ENCODE measurements at regions of chr18 and their contacts with region 1.

Region 1: DNA sequence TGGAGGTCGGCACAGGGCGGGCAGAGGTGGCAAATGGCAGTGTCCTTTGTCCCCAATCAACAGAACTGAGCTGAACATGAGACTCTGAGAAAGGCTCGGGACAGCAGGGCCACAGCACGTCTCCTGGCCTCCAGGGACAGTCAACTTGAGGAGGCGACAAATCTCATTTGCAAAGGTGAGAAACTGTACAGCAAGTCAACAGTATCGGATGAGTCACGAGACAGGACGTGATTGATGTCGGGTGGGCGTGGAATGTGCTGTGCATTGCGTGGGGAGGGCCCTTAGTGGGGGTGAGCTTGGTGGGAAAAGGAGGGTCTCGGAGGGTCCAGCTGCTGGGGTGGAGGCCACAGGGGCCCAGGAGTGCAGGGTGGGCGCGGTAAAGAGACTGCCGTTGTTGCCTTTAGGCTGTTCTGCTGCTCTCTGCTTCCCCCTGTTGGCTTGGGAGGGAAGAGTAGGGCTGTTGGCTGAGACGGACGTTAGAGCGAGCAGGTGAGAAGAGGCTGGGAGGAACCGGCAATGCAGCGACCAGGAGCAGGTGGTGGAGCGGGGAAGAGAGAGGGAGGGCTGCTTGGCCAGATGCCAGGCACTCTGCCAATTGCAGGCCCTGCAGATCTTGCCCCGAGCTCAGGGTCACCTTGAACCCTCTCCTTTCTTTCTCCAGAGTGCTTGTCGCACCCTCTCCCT is 164.3 kb downstream of the BCL2 start:
- DNase-seq: peak; percentile 71 to 81 (median 79)
- H3K4me3 ChIP-seq: peak overlapping the region in 4 of 7 experiments; percentile 30 to 71 (median 58)
- H3K27ac ChIP-seq: no peak overlapping the region
- H3K4me1 ChIP-seq: peaks cover 0 to 13% (median 5%) of the 10 kb centered on the region in 4 experiments
- H3K27me3 ChIP-seq: no peaks in the 10 kb centered on the region

Region 2: DNA sequence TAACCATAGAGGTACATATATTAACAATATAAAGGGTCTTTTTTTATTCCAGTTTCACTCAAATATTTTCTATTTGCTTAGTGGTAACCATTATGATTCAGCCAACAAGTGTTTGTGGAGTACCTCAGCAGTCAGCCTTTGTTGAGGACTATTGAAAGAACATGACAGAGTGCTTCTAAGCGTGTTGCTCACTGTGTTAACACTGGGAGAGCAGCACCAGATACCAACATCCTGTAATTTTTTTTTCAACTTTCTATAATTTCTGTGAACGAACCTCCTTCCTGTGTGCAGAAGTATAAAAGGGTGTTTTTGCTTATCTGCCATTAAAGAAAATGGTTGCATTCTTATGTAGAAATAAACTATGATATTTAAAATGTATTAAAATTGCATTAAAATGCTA is 200.9 kb before region 1 on chr18:
- CTCF ChIA-PET with region 1: no interaction called
- POLR2A ChIA-PET with region 1: no interaction called
- DNase-seq: peak in 2 of 3 donors; percentile 29 to 41
- H3K4me3 ChIP-seq: no peak overlapping the region
- H3K27ac ChIP-seq: no peak overlapping the region
- H3K4me1 ChIP-seq: peaks cover 21 to 42% (median 30%) of the 10 kb centered on the region in 4 experiments
- H3K27me3 ChIP-seq: no peaks in the 10 kb centered on the region

Region 3: DNA sequence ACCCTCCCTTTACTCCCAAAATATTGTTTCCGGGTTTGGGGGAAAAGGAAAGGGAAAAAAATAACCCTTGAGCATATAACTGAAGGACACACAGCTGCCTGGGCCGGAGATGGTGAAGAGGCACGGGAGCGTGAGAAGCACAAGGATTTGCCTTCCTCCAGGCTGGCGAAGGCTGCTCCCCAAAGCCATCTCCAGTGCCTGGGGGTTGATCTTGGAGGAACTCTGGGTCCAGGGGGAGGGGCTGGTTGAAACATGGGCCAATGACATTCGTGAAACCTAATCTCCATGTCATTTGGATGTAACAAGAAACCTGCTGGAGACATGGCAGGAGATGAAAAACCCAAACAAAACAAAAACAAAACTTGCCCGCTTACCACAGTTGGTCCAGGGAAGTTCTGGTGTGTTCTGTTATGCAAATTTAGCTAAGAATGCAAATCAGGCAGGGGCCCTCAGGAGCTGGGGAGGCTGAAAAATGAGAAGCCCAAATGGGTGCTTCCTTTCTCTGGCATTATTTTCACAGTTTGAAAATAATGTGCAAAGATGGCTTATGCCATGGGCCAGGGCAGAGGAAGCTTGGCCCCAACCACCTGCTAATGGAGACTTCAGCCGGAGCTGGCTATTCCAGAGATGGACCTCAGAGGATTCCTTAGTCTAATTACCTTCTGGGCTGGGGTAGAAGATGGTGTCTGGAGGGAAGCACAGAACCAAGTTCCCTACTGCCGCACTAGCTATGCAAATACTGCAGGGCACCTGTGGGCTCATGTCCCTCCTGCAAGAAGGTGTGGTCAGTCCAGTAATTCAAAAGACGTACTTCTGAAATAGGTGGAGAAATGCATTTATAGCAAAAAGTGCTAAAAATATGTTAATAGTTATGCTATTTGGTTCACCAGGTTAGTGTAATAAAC is 16.6 kb before region 1 on chr18:
- CTCF ChIA-PET with region 1: interaction called, 122 read pairs
- POLR2A ChIA-PET with region 1: no interaction called
- DNase-seq: peak in 2 of 3 donors; percentile 50 to 70
- H3K4me3 ChIP-seq: peak overlapping the region in 5 of 7 experiments; percentile 34 to 67 (median 46)
- H3K27ac ChIP-seq: no peak overlapping the region
- H3K4me1 ChIP-seq: peaks cover 9 to 61% (median 49%) of the 10 kb centered on the region in 4 experiments
- H3K27me3 ChIP-seq: no peaks in the 10 kb centered on the region